Activated naive CD8-positive, alpha-beta T cell treated with anti-CD3 and anti-CD28 coated beads, Interleukin-2, amount 10 ng/mL, durations not matched to agents 7 days and 5 days (primary cell): ENCODE measurements at regions of chr19 and their contacts with region 1.

Region 1: GRCh38 chr19:48842789-48843162 is 6.5 kb upstream of the HSD17B14 start:
- DNase-seq: peak; percentile 50
- ATAC-seq: peak; percentile 60
- H3K4me3 Mint-ChIP-seq: no peak overlapping the region
- H3K27ac Mint-ChIP-seq: peak overlapping the region; percentile 71
- H3K4me1 Mint-ChIP-seq: peaks cover 1% of the 10 kb centered on the region
- H3K27me3 Mint-ChIP-seq: no peaks in the 10 kb centered on the region

Region 2: DNA sequence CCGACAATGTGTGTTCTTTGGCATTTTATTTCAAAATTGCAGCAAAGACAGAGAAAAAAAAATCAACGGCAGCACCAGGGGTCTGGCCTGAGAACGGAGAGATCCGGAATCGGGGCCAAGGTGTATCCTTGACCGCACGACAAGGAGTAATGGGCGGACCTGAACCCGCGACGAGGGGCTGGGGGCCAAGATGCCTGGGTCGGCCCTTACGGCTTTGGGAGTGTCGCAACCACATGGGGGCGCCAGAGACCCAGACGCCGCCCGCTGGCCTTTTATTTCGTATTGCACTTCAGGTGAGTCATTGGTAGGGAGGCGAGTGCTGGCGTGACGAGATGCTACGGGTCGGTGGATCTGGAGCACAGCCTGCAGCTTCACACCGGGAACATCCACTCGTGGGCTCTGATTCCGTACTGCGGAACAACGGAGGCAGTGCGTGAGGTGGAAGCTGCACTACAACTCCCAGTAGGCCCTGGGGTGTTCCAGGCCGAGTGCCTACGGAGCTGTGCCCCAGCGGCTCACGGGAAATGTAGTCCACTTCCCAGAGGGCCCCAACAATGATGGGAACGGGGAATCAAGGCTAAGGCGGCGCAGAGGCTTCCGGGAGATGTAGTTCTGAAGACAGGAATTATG is 47.6 kb before region 1 on chr19:
- POLR2A ChIA-PET with region 1: interaction called, 10 read pairs
- DNase-seq: peak; percentile 86
- ATAC-seq: peak; percentile 98
- H3K4me3 Mint-ChIP-seq: peak overlapping the region; percentile 92
- H3K27ac Mint-ChIP-seq: peak overlapping the region; percentile 82
- H3K4me1 Mint-ChIP-seq: peaks cover 1% of the 10 kb centered on the region
- H3K27me3 Mint-ChIP-seq: no peaks in the 10 kb centered on the region

Region 3: DNA sequence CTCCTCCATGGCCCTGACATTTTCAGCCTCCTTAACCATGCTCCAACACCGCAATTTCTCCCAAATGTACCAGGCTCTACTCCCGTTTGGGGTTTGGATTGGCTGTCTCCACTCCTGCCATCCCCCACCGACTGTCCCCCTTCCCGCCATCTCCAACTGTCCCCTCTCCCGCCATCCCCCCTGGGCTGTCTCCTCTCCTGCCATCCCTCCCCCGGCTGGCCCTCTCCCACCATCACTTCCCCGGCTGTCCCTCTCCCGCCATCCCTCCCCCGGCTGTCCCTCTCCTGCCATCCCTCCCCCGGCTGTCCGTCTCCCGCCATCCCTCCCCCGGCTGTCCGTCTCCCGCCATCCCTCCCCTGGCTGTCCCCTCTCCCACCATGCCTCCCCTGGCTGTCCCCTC is 37.3 kb before region 1 on chr19:
- POLR2A ChIA-PET with region 1: no interaction called
- DNase-seq: no peak
- ATAC-seq: no peak
- H3K4me3 Mint-ChIP-seq: no peak overlapping the region
- H3K27ac Mint-ChIP-seq: no peak overlapping the region
- H3K4me1 Mint-ChIP-seq: peaks cover 18% of the 10 kb centered on the region
- H3K27me3 Mint-ChIP-seq: no peaks in the 10 kb centered on the region

Region 4: DNA sequence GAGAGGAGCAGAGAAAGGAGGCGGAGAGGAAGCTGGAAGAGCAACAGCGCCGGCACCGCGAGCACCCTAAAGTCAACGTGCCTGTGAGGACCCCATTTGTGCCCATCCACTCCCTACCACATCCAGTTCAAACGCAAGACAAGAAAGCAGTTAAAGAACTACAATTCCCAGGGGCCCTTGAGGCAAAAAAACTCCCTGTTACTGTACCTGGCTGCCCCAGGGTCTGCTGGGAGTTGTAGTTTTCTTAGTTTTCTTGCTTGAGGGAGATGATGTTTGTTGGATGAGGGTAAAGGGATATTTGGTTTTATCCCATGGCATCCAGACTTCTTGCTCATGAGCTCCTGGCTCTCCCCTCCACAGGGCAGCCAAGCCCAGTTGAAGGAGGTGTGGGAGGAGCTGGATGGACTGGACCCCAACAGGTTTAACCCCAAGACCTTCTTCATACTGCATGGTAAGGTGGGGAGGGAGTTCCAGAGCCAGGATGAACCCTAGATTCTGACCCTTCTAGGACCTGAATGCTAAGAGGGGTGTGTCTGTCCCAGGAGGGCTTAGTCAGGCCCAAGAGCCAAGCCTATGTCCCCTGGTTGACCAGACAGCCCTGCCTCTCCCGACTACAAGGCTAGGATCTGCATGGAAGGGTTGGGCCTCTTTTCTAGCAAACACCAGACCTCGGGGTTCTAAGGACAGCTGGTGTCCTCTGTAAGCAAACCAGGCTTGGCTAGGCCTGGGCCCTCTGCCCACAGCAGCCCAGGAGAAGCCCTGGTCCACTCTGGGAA is 70.5 kb after region 1 on chr19:
- POLR2A ChIA-PET with region 1: no interaction called
- DNase-seq: no peak
- ATAC-seq: peak; percentile 30
- H3K4me3 Mint-ChIP-seq: no peak overlapping the region
- H3K27ac Mint-ChIP-seq: no peak overlapping the region
- H3K4me1 Mint-ChIP-seq: no peaks in the 10 kb centered on the region
- H3K27me3 Mint-ChIP-seq: no peaks in the 10 kb centered on the region